ENCODE measurements at regions of chr16 and their contacts with region 1.

Region 1: DNA sequence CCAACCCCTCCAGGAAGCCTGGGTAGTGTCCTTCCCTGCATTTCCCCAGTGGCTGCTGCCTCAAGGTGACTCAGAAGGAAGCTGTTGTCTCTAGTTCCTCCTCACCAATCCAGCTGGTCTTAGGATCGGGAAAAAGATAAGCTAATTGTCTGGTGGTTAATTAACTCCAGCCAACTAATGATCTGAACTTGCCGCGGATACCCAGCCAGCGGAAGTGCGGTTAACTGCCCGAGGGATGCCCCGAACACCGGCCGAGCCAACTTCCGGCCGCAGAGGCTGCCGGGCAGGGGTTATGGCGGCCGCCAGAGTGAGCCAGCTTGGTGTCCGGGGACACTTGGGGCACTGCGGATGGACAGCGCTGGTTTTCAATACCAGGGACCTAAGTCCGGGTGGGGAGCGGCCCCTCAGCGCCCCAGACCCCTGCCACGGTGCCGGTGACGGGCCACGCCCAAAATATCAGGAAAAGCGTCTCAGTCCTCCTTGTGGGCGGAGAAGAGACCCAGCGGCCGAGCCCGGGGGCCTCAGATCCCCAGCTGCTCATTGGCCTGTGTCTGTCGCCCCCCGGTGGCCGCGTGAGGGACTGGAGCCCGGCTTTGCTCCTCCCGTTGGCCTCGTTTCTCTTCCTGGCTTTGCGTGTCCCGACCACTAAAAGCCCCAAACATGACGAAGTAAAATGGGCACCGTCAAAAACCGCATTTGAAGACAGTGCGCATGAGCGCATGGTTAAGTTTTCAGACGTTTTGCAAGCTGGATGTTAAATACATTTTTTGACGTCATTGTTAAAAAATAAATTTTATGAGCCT is 10.2 kb upstream of the PRSS22 start:
- DNase-seq: peak; percentile 96 to 97
- ATAC-seq: peak; percentile 97 to 98 (median 98)
- H3K4me3 ChIP-seq: peak overlapping the region; percentile 84
- H3K27ac ChIP-seq: peak overlapping the region; percentile 95
- H3K4me1 ChIP-seq: peaks cover 6% of the 10 kb centered on the region
- H3K27me3 ChIP-seq: no peaks in the 10 kb centered on the region
- CTCF ChIP-seq: peak; percentile 98

Region 2: DNA sequence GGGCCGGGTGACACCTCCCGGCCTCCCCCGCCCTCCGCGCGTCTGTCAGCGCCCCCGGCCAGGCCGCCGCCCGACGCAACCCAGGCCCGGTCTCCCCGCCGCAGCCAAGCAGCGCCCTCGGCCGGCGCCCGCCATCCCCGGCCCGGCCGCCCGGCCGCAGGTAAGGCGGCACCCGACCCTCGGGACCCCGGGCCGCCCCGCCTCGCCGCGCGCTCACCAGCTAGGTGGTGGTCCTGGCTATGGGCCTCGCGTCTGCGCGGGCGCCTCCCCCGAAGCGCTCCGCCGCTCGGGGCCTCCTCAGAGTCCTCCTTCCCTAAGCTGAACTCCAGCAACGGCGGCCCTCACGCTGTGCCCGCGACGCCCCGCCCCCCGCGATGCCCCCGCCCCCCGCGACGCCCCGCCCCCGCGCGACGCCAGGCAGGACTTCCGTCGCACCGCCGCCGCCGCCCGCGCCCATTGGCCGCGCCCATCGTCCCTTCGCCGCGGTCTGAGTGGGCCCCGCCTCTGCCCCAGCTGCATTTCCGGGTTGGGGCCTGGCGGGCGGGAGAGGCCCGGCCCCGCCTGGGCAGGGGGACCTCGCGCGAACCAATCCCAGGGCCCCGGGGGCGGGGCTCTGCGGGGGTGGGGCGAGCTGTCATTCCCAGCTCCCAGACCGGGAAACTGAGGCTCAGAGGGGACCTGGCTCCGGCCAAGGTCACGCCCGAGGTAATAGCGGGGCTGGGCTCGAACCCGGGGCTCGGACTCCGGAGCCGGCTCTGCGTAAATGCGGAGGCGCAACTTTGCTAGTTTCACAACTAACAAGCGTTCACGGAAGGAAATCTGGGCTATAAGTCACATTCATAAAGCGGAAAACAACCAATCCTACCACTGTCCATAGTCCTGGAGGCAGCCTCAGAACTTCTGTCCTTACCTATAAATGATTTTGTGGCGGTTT is 194.9 kb before region 1 on chr16:
- intact Hi-C with region 1: loop called in 1 of 2 experiments (anchors 10 kb)
- DNase-seq: peak; percentile 96 to 98
- ATAC-seq: peak; percentile 91 to 94 (median 92)
- H3K4me3 ChIP-seq: peak overlapping the region; percentile 92
- H3K27ac ChIP-seq: peak overlapping the region; percentile 90
- H3K4me1 ChIP-seq: peaks cover 33% of the 10 kb centered on the region
- H3K27me3 ChIP-seq: no peaks in the 10 kb centered on the region
- CTCF ChIP-seq: no peak

Region 3: GRCh38 chr16:2720719-2721633 is 147.2 kb before region 1 on chr16:
- intact Hi-C with region 1: loop called in 1 of 2 experiments (anchors 10 kb)
- DNase-seq: peak; percentile 86 to 92
- ATAC-seq: peak; percentile 79 to 89 (median 86)
- H3K4me3 ChIP-seq: peak overlapping the region; percentile 63
- H3K27ac ChIP-seq: peak overlapping the region; percentile 53
- H3K4me1 ChIP-seq: peaks cover 18% of the 10 kb centered on the region
- H3K27me3 ChIP-seq: peaks cover 0 to 7% (median 0%) of the 10 kb centered on the region in 3 donors
- CTCF ChIP-seq: peak; percentile 87

Region 4: GRCh38 chr16:2911580-2912329 is 43.6 kb after region 1 on chr16 and contains the start of gene FLYWCH1:
- intact Hi-C with region 1: no loop called
- DNase-seq: peak; percentile 98 to 99
- ATAC-seq: peak; percentile 94 to 99 (median 96)
- H3K4me3 ChIP-seq: peak within 1 kb of the TSS; percentile 93
- H3K27ac ChIP-seq: peak within 1 kb of the TSS; percentile 95
- H3K4me1 ChIP-seq: peaks cover 24% of the 10 kb centered on the region
- H3K27me3 ChIP-seq: no peaks in the 10 kb centered on the region
- CTCF ChIP-seq: no peak
- total RNA-seq, gene FLYWCH1: 33.0 to 55.5 (median 40.3) TPM

Region 5: GRCh38 chr16:3074860-3075522 is 206.8 kb after region 1 on chr16:
- intact Hi-C with region 1: no loop called
- DNase-seq: peak in 1 of 2 donors; percentile 55
- ATAC-seq: peak in 2 of 4 donors; percentile 32 to 48
- H3K4me3 ChIP-seq: no peak overlapping the region
- H3K27ac ChIP-seq: no peak overlapping the region
- H3K4me1 ChIP-seq: no peaks in the 10 kb centered on the region
- H3K27me3 ChIP-seq: no peaks in the 10 kb centered on the region
- CTCF ChIP-seq: no peak

Measured in psoas muscle (tissue), 8 donors.